PC-9 (cell line): ENCODE measurements at regions of chr14 and their contacts with region 1.

Region 1: DNA sequence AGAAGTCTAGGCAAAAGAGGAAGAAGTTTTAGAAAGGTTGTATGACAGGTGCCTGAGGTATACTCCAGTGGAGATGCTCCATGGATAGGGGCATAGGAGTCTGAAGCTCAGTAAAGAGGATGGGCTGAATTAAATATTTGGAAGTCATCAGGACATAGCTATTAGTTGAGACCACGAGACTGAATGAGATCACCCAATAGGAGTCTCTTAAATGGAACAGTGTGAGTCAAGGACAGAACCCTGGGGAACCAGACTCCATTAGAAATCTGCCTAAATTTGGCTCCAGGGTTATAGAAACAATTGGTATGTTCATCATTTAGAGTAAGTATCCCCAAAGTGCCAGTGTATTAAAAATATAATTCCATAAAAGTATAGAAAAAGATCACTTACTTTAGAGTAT is 172.6 kb downstream of the PRKCH start:
- DNase-seq: no peak
- H3K4me3 ChIP-seq: no peak overlapping the region
- H3K27ac ChIP-seq: no peak overlapping the region
- H3K4me1 ChIP-seq: peaks cover 21% of the 10 kb centered on the region; the same call in 1 of the 2 replicates
- H3K27me3 ChIP-seq: no peaks in the 10 kb centered on the region
- CTCF ChIP-seq: no peak

Region 2: GRCh38 chr14:61368114-61368726 is 125.8 kb before region 1 on chr14:
- CTCF ChIA-PET with region 1: no interaction called
- POLR2A ChIA-PET with region 1: interaction called, 18 read pairs
- intact Hi-C with region 1: no loop called
- DNase-seq: peak; percentile 74 to 96
- H3K4me3 ChIP-seq: peak overlapping the region; percentile 51
- H3K27ac ChIP-seq: peak overlapping the region; percentile 97
- H3K4me1 ChIP-seq: peaks cover 64% of the 10 kb centered on the region
- H3K27me3 ChIP-seq: no peaks in the 10 kb centered on the region
- CTCF ChIP-seq: no peak

Region 3: DNA sequence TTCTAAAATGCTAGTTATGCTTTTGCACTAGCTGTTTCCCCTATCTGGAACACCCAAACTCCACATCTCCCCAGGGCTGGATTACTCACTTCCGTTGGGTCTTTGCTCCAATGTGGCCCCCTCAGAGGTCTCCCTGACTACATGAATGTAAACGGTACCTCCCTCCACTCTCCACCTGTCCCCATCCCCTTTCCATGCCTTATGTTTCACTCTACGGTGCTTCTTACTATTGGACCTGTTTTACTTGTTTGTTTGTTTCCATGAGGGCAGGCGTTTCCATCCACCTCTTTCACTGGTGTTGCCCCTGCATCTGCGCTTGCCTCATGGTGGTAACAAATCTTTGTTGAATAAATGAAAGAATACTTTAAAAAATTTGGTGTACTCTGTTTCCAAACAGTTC is 524.6 kb after region 1 on chr14:
- CTCF ChIA-PET with region 1: no interaction called
- POLR2A ChIA-PET with region 1: no interaction called
- intact Hi-C with region 1: no loop called
- DNase-seq: no peak
- H3K4me3 ChIP-seq: no peak overlapping the region
- H3K27ac ChIP-seq: no peak overlapping the region
- H3K4me1 ChIP-seq: no peaks in the 10 kb centered on the region
- H3K27me3 ChIP-seq: no peaks in the 10 kb centered on the region
- CTCF ChIP-seq: no peak